Activated naive CD4-positive, alpha-beta T cell treated with anti-CD3 and anti-CD28 coated beads for 36 hours (primary cell): ENCODE measurements at regions of chr13 and their contacts with region 1.

Region 1: GRCh38 chr13:28805193-28805819 is 14.8 kb upstream of the MTUS2 start:
- DNase-seq: peak; percentile 55
- H3K4me3 Mint-ChIP-seq: no peak overlapping the region
- H3K27ac Mint-ChIP-seq: no peak overlapping the region
- H3K4me1 Mint-ChIP-seq: no peaks in the 10 kb centered on the region
- H3K27me3 Mint-ChIP-seq: peaks cover 11% of the 10 kb centered on the region

Region 2: GRCh38 chr13:27997904-27998522 is 807.3 kb before region 1 on chr13:
- CTCF ChIA-PET with region 1: no interaction called
- intact Hi-C with region 1: no loop called
- DNase-seq: peak; percentile 71
- H3K4me3 Mint-ChIP-seq: no peak overlapping the region
- H3K27ac Mint-ChIP-seq: no peak overlapping the region
- H3K4me1 Mint-ChIP-seq: peaks cover 3% of the 10 kb centered on the region
- H3K27me3 Mint-ChIP-seq: no peaks in the 10 kb centered on the region

Region 3: GRCh38 chr13:29369060-29369743 is 563.9 kb after region 1 on chr13:
- CTCF ChIA-PET with region 1: no interaction called
- intact Hi-C with region 1: loop called (anchors 1 kb)
- DNase-seq: peak; percentile 10
- H3K4me3 Mint-ChIP-seq: no peak overlapping the region
- H3K27ac Mint-ChIP-seq: no peak overlapping the region
- H3K4me1 Mint-ChIP-seq: no peaks in the 10 kb centered on the region
- H3K27me3 Mint-ChIP-seq: peaks cover 18% of the 10 kb centered on the region